ENCODE measurements at regions of chr20 and their contacts with region 1.

Region 1: GRCh38 chr20:5557123-5557522 is 193.1 kb upstream of the SHLD1 start:
- H3K4me3 ChIP-seq: no peak overlapping the region
- H3K27ac ChIP-seq: no peak overlapping the region
- H3K4me1 ChIP-seq: no peaks in the 10 kb centered on the region
- CTCF ChIP-seq: 0 out of 2 replicates have a peak, but pooled peaks have one; percentile 21

Region 2: GRCh38 chr20:5309971-5310370 is 247.2 kb before region 1 on chr20:
- CTCF ChIA-PET with region 1: no interaction called
- POLR2A ChIA-PET with region 1: no interaction called
- H3K4me3 ChIP-seq: no peak overlapping the region
- H3K27ac ChIP-seq: no peak overlapping the region
- H3K4me1 ChIP-seq: no peaks in the 10 kb centered on the region
- CTCF ChIP-seq: no peak

Region 3: GRCh38 chr20:5402903-5403531 is 154.1 kb before region 1 on chr20:
- CTCF ChIA-PET with region 1: no interaction called
- POLR2A ChIA-PET with region 1: no interaction called
- H3K4me3 ChIP-seq: no peak overlapping the region
- H3K27ac ChIP-seq: no peak overlapping the region
- H3K4me1 ChIP-seq: no peaks in the 10 kb centered on the region
- CTCF ChIP-seq: no peak

Region 4: DNA sequence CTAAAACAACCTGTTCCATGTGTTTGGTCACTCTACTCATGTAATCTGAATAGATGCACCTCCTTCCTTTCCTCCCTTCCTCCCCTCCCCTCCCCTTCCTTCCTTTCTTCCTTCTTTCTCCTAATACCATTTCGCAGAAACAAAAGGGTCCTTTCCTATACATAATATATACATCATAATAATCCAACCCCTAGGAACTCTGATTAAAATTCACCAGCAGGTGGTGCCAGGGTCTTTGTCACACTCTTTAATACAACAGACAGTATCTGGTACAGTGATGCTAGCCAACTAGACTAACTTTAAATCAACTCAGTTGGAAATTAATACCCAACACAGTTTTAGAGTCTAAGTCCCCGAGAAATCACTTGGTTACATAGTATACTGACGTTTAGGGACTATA is 11.9 kb after region 1 on chr20:
- CTCF ChIA-PET with region 1: interaction called, 16 read pairs
- POLR2A ChIA-PET with region 1: no interaction called
- H3K4me3 ChIP-seq: no peak overlapping the region
- H3K27ac ChIP-seq: no peak overlapping the region
- H3K4me1 ChIP-seq: no peaks in the 10 kb centered on the region
- CTCF ChIP-seq: peak; percentile 29; the same call in 1 of the 2 replicates